ENCODE measurements at regions of chr20 and their contacts with region 1.

Region 1: DNA sequence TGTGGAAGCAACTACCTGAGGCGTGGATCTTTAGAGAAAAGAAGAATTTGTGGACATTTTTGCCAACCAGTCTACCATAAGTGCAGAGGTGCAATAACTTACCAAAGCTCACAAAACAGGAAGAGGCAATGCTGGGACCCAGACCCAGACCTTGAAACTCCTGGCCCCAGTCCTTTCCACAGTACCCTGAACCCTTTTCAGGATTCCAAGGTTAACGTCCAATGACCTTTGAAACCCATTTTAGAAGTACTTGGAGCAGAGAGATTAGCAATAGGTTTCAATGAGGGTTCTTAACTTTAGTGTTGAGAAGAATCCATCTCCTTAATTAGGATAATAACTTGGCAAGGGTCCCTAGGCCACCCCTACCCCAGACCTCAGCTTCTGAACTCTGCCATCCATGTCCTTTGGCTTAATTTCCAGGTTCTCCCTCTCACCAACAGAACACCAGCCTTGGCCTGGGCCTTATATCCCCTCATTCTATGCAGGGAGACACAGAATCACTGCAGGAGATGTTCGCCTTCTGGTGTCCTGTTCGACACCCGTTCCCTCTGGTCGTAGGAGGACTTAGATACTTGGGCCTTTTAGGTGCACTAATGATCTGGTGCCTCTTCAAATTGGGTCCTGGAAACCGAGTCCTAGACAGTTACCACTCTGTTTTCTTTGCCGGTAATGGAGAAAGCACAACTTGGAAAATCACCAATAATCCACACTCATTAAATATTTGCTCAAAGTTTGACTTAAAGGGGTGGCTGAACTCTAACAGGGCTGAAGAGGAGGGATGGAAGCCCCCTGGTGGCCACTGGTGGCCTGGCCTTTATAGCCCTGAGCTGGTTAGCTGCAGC is 40.6 kb downstream of the ISM1 start:
- DNase-seq: peak; percentile 86
- ATAC-seq: peak; percentile 99
- H3K4me3 ChIP-seq: no peak overlapping the region
- H3K27ac ChIP-seq: no peak overlapping the region
- H3K4me1 ChIP-seq: peaks cover 32% of the 10 kb centered on the region
- H3K27me3 ChIP-seq: no peaks in the 10 kb centered on the region
- CTCF ChIP-seq: peak; percentile 96
- EP300 ChIP-seq: 0 out of 4 replicates have a peak, but pooled peaks of 1 of the 2 experiments have one; percentile 39
- POLR2A ChIP-seq: no peak
- RAD21 ChIP-seq: peak; percentile 95

Region 2: GRCh38 chr20:13169086-13169485 is 92.6 kb before region 1 on chr20:
- CTCF ChIA-PET with region 1: no interaction called
- POLR2A ChIA-PET with region 1: no interaction called
- in situ Hi-C with region 1: no loop called
- intact Hi-C with region 1: loop called (anchors 2 kb)
- DNase-seq: peak; percentile 32
- ATAC-seq: no peak
- H3K4me3 ChIP-seq: no peak overlapping the region
- H3K27ac ChIP-seq: no peak overlapping the region
- H3K4me1 ChIP-seq: no peaks in the 10 kb centered on the region
- H3K27me3 ChIP-seq: no peaks in the 10 kb centered on the region
- CTCF ChIP-seq: no peak
- EP300 ChIP-seq: no peak
- POLR2A ChIP-seq: no peak
- RAD21 ChIP-seq: no peak

Region 3: DNA sequence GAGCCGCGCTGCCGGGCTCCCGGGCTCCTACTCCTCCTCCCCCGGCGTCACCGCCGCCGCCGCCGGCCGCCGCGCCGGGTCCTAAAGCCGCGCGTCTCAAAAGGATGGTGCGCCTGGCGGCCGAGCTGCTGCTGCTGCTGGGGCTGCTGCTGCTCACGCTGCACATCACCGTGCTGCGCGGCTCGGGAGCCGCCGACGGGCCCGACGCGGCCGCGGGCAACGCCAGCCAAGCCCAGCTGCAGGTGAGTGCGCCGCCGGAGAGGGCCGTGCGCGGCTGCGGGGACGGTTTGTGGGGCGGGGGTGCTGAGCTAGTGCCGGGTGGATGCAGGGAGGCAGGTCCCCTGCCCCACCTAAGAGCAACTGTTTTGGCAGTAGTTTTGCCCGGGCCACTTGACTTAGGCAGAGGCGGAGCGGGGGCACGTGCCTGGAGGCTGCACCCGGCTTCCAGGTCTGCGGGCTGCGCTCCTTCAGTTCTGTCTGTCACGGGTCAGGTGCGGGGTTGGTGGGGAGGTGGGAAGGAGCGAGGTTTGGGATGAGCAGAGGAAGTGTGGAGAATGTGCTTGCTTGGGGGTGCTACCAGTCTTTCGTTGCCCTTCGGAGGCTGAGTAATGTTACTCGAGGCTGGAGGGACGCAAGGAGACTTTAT is 39.9 kb before region 1 on chr20:
- CTCF ChIA-PET with region 1: no interaction called
- POLR2A ChIA-PET with region 1: interaction called, 4 read pairs
- in situ Hi-C with region 1: no loop called
- intact Hi-C with region 1: loop called (anchors 1 kb)
- DNase-seq: peak; percentile 65
- ATAC-seq: peak; percentile 89
- H3K4me3 ChIP-seq: peak overlapping the region; percentile 65 to 81 (median 77)
- H3K27ac ChIP-seq: no peak overlapping the region
- H3K4me1 ChIP-seq: peaks cover 22% of the 10 kb centered on the region
- H3K27me3 ChIP-seq: peaks cover 0 to 35% of the 10 kb centered on the region in 2 experiments; a peak in 3 of 5 replicates
- CTCF ChIP-seq: peak; percentile 27; the same call in 1 of the 2 replicates
- EP300 ChIP-seq: no peak
- POLR2A ChIP-seq: 0 out of 4 replicates have a peak, but pooled peaks of 1 of the 2 experiments have one; percentile 19
- RAD21 ChIP-seq: peak; percentile 73

Region 4: DNA sequence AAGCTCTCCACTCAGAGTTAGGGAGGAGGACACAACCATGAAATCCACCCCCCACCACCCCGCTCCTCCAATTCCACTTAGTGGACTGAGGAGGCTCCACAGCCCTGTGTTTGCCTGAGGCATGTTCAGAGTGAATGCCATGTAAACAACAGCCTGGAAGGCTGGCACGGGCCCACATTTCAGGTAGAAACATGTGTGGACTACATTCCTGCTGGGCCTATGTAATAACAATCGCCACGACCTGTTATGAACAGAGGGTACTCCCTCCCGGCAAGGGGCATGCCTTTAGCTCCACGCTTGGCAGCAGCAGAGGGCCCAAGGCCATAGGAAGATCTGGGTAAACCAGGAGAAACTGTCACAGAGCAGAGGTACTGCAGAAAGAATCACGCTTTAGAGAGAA is 24.9 kb after region 1 on chr20:
- CTCF ChIA-PET with region 1: no interaction called
- POLR2A ChIA-PET with region 1: no interaction called
- in situ Hi-C with region 1: no loop called
- intact Hi-C with region 1: no loop called
- DNase-seq: no peak
- ATAC-seq: 0 out of 3 replicates have a peak, but pooled peaks have one; percentile 19
- H3K4me3 ChIP-seq: no peak overlapping the region
- H3K27ac ChIP-seq: no peak overlapping the region
- H3K4me1 ChIP-seq: peaks cover 10% of the 10 kb centered on the region
- H3K27me3 ChIP-seq: no peaks in the 10 kb centered on the region; a peak in 1 of 5 replicates
- CTCF ChIP-seq: no peak
- EP300 ChIP-seq: no peak
- POLR2A ChIP-seq: no peak
- RAD21 ChIP-seq: no peak

Region 5: DNA sequence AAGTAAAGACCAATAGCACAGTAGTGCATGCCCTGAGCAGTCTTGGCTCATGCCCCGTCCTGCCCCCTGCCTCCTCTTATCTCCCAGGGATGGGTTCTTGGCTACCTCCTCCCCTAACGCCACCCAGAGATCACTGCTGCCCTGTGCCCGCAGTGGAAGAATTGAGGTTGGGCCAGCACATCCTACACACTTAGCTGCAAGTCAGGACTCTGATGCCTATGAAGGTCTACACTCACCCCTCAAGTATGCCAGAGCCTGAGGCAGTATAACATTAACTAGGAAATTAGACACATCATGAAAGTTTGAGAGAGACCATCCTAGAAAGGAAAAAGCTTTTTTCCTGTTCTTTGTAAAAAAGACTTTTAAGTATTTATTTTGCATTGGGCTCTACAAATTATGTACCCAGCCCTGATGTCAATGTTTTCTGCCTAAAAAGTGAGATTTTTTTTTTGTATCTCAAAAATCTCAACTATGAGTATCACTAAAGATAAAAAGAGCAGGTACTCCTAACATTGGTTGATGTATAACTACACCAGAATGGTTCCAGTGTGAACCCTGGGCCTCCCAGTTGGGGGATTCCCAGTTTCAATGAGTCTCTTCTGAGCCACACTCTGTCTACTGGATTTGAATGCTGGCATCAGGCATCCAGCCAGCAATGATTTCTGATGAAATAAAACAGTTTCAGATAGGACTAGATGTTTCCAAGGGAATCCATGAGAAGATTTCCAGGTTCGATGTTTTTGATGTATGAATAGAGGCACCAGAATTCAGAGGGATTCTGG is 74.8 kb after region 1 on chr20:
- CTCF ChIA-PET with region 1: no interaction called
- POLR2A ChIA-PET with region 1: no interaction called
- in situ Hi-C with region 1: no loop called
- intact Hi-C with region 1: no loop called
- DNase-seq: peak; percentile 87
- ATAC-seq: peak; percentile 89
- H3K4me3 ChIP-seq: no peak overlapping the region; a peak in 1 of 6 replicates
- H3K27ac ChIP-seq: peak overlapping the region; percentile 52
- H3K4me1 ChIP-seq: peaks cover 87% of the 10 kb centered on the region
- H3K27me3 ChIP-seq: no peaks in the 10 kb centered on the region
- CTCF ChIP-seq: no peak
- EP300 ChIP-seq: no peak; a peak in 1 of 4 replicates
- POLR2A ChIP-seq: no peak
- RAD21 ChIP-seq: no peak

Region 6: GRCh38 chr20:13856354-13856753 is 594.7 kb after region 1 on chr20:
- CTCF ChIA-PET with region 1: no interaction called
- POLR2A ChIA-PET with region 1: no interaction called
- in situ Hi-C with region 1: no loop called
- intact Hi-C with region 1: no loop called
- DNase-seq: no peak
- ATAC-seq: no peak
- H3K4me3 ChIP-seq: no peak overlapping the region
- H3K27ac ChIP-seq: no peak overlapping the region
- H3K4me1 ChIP-seq: no peaks in the 10 kb centered on the region
- H3K27me3 ChIP-seq: peaks cover 0 to 9% of the 10 kb centered on the region in 2 experiments; a peak in 2 of 5 replicates
- CTCF ChIP-seq: no peak
- EP300 ChIP-seq: no peak
- POLR2A ChIP-seq: no peak
- RAD21 ChIP-seq: no peak